B cell (primary cell): ENCODE measurements at regions of chr22 and their contacts with region 1.

Region 1: DNA sequence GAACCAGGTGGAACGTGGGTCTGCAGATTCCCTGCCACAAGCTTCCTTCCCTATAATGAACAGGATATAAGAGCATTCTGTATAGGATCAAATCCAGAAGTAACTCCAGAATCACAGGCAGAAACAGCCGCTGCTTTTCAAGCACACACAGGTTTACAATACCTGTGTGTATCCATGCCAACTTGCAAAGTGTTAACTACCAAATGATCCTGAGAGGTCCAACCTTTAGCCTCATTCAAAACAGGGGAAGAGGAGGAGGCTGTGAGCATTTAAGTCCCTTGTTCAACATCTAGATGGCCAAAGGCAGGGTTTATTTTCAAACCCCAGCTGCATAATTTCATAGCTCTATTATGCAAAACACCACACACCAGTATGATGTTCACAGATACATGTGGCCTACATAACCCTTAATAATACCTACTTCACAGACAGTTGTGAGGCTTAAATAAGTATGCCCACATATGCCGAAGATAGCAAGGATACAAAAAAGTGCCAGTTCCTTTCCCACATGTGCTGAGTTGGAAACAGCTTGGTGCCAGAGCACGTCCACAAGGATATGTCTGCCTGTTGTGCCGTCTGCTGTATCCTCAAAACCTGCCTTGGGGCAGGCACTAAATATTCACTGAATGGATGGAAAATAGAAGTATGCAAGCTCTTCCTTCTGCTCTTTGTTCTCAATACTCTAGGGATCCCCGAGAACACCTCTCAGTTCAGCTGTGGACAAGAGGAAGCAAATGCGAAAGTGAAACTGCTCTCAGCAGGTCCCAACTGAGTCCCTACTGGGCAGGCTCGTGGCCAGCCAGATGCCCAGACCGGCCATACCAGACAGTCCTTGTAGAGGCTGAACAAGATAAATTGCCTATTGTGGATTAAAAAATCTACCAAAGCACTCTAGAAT is 66.8 kb downstream of the LARGE1 start:
- DNase-seq: peak; percentile 71
- ATAC-seq: peak; percentile 94
- H3K4me3 ChIP-seq: peak overlapping the region in 3 of 5 experiments; percentile 38 to 62 (median 49)
- H3K4me3 Mint-ChIP-seq: peak overlapping the region; percentile 87
- H3K27ac ChIP-seq: peak overlapping the region; percentile 2 to 64
- H3K27ac Mint-ChIP-seq: peak overlapping the region; percentile 78
- H3K4me1 ChIP-seq: peaks cover 20 to 29% of the 10 kb centered on the region in 2 donors
- H3K4me1 Mint-ChIP-seq: peaks cover 31% of the 10 kb centered on the region
- H3K27me3 ChIP-seq: no peaks in the 10 kb centered on the region
- H3K27me3 Mint-ChIP-seq: no peaks in the 10 kb centered on the region
- CTCF ChIP-seq: no peak

Region 2: GRCh38 chr22:33889748-33890147 is 36.3 kb after region 1 on chr22:
- CTCF ChIA-PET with region 1: no interaction called
- POLR2A ChIA-PET with region 1: no interaction called
- intact Hi-C with region 1: loop called (anchors 5 kb)
- DNase-seq: peak; percentile 35
- ATAC-seq: peak; percentile 63
- H3K4me3 ChIP-seq: no peak overlapping the region
- H3K4me3 Mint-ChIP-seq: peak overlapping the region; percentile 62
- H3K27ac ChIP-seq: peak overlapping the region in 1 of 2 donors; percentile 35
- H3K27ac Mint-ChIP-seq: peak overlapping the region; percentile 47
- H3K4me1 ChIP-seq: peaks cover 34% of the 10 kb centered on the region in 2 donors
- H3K4me1 Mint-ChIP-seq: peaks cover 69% of the 10 kb centered on the region
- H3K27me3 ChIP-seq: no peaks in the 10 kb centered on the region
- H3K27me3 Mint-ChIP-seq: no peaks in the 10 kb centered on the region
- CTCF ChIP-seq: no peak

Region 3: DNA sequence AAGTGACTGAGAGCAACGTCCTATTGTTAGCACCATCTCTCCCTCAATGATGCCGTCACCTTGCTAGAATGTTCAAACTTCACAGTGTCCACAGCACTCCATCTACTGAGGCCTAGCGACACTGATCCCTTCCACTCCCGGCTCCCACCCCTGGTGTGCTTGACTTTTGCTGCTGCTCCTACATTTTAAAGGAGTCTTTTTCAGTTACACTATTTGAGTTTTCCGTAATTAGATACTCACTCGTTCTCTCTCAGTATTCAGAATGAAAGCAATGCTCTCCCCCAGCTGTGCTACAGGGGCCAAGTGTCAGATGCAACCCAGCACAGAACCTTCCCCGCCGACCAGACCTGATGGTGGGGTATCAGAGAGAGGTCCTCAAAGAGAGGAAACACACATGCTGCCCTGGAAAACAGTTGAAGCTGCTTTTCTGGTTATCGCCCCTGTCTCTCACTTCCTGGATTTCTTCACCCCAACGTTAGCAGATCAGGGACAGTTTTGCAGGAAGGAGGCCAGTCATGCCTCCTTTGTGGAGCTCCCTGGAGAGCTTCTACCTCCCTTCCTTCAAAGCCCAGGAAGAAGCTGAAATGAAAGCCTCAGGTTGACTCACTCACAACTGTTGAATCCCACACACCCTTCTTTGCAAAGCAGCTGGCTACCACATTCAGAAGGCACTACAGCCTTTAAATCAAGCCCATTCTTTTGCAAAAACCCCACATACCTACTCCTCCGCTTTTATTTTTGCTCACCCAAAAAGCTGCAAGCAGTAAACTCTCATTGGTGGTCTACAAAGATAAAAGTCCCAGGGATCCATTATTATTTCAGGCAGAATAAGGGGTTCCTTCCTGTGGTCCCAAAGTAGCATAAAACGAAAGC is 43.4 kb after region 1 on chr22:
- CTCF ChIA-PET with region 1: no interaction called
- POLR2A ChIA-PET with region 1: no interaction called
- intact Hi-C with region 1: loop called (anchors 1 kb)
- DNase-seq: peak; percentile 27
- ATAC-seq: peak; percentile 55
- H3K4me3 ChIP-seq: no peak overlapping the region
- H3K4me3 Mint-ChIP-seq: peak overlapping the region; percentile 72
- H3K27ac ChIP-seq: peak overlapping the region; percentile 19 to 56
- H3K27ac Mint-ChIP-seq: peak overlapping the region; percentile 59
- H3K4me1 ChIP-seq: peaks cover 28 to 29% of the 10 kb centered on the region in 2 donors
- H3K4me1 Mint-ChIP-seq: peaks cover 75% of the 10 kb centered on the region
- H3K27me3 ChIP-seq: no peaks in the 10 kb centered on the region
- H3K27me3 Mint-ChIP-seq: no peaks in the 10 kb centered on the region
- CTCF ChIP-seq: no peak